CD14-positive monocyte (primary cell): ENCODE measurements at regions of chr6 and their contacts with region 1.

Region 1: DNA sequence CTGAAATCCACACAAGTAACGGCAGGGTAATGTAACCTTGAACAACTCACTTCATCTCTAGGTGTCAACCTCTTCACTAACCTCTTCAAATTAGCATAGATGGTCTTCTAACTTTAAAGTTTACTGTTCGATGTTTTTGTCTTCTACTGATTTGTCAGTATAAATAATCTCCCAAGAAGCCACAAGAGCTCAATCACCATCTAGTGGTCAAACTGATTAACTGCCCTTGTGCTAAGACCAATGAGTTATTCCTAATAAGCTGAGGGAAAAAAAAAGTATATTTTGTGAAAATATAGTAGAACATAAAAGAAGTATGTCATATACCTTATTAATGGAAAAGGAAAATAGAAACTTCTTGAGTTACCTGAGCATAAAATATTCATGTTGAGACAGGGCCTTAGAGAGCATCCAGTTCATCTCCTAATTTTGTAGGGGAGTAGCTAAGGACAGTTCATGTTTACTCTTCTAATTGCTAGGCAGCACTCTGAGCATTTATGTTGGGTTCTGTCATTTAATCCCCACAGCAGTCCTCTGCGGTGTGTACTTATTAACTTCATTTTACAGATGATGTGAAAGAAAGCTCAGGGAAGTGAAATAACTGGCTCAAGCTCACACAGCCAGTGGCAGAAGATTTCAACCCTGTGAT is 317.1 kb downstream of the ESR1 start:
- DNase-seq: peak; percentile 10 to 42 (median 41)
- H3K4me3 ChIP-seq: no peak overlapping the region
- H3K4me3 Mint-ChIP-seq: no peak overlapping the region
- H3K27ac ChIP-seq: peak overlapping the region in 1 of 2 donors; percentile 10
- H3K27ac Mint-ChIP-seq: no peak overlapping the region
- H3K4me1 ChIP-seq: no peaks in the 10 kb centered on the region
- H3K4me1 Mint-ChIP-seq: no peaks in the 10 kb centered on the region
- H3K27me3 ChIP-seq: no peaks in the 10 kb centered on the region
- H3K27me3 Mint-ChIP-seq: peaks cover 0 to 1% (median 0%) of the 10 kb centered on the region in 3 donors
- CTCF ChIP-seq: peak; percentile 73

Region 2: GRCh38 chr6:151675746-151676416 is 448.7 kb before region 1 on chr6:
- intact Hi-C with region 1: loop called in 1 of 2 experiments (anchors 10 kb)
- DNase-seq: peak in 2 of 3 donors; percentile 24 to 30
- H3K4me3 ChIP-seq: no peak overlapping the region
- H3K4me3 Mint-ChIP-seq: no peak overlapping the region
- H3K27ac ChIP-seq: no peak overlapping the region
- H3K27ac Mint-ChIP-seq: no peak overlapping the region
- H3K4me1 ChIP-seq: peaks cover 7 to 10% of the 10 kb centered on the region in 2 donors
- H3K4me1 Mint-ChIP-seq: peaks cover 13% of the 10 kb centered on the region
- H3K27me3 ChIP-seq: no peaks in the 10 kb centered on the region
- H3K27me3 Mint-ChIP-seq: peaks cover 0 to 2% (median 2%) of the 10 kb centered on the region in 3 donors
- CTCF ChIP-seq: peak; percentile 85

Region 3: DNA sequence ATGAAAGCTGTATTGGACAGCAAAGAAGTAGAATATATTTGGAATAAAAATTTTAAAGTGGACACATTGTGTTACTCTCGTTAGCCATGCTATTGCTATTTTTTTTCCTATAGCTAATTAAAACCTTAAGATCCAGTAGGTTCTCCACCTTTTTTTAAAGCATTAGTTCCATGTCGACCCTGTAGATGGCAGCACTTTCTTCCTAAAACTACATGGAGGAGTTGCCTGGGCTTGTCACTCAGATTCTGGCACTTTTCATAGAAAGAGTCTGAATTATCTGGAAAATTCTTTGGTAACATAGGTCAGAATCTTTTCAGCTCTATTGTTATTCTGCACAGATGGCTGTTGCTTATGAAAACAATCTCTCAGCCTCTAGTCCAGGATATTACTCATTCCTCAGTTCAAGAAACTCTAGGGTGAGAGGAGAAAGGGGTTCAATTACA is 359.1 kb before region 1 on chr6:
- intact Hi-C with region 1: loop called in 1 of 2 experiments (anchors 10 kb)
- DNase-seq: peak; percentile 32 to 53 (median 40)
- H3K4me3 ChIP-seq: no peak overlapping the region
- H3K4me3 Mint-ChIP-seq: no peak overlapping the region
- H3K27ac ChIP-seq: no peak overlapping the region
- H3K27ac Mint-ChIP-seq: no peak overlapping the region
- H3K4me1 ChIP-seq: peaks cover 7 to 10% of the 10 kb centered on the region in 2 donors
- H3K4me1 Mint-ChIP-seq: peaks cover 9% of the 10 kb centered on the region
- H3K27me3 ChIP-seq: no peaks in the 10 kb centered on the region
- H3K27me3 Mint-ChIP-seq: peaks cover 0 to 3% (median 3%) of the 10 kb centered on the region in 3 donors
- CTCF ChIP-seq: peak; percentile 83

Region 4: DNA sequence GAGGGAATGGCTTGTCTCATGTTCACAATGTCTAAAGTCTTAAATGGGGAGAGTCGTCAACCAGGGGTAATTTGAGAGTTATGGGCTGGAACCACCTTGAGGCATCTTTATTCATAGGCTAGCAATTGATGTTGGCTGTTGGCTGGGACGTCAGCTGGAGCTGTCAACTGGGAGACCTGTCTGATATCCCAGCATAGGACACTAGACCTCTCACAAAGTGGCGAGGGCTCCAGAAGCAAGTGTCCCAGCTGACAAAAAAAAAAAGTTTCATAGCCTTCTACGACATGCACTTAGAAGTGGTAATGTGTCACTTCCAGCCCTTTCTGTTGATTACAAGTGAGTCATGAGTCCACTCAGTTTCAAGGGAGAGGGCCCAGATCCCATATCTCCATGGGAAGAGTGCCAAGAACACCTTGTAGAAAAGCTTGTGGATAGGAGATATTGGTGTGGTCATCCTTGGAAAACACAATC is 39.1 kb before region 1 on chr6:
- intact Hi-C with region 1: no loop called
- DNase-seq: no peak
- H3K4me3 ChIP-seq: no peak overlapping the region
- H3K4me3 Mint-ChIP-seq: no peak overlapping the region
- H3K27ac ChIP-seq: no peak overlapping the region
- H3K27ac Mint-ChIP-seq: no peak overlapping the region
- H3K4me1 ChIP-seq: no peaks in the 10 kb centered on the region
- H3K4me1 Mint-ChIP-seq: no peaks in the 10 kb centered on the region
- H3K27me3 ChIP-seq: no peaks in the 10 kb centered on the region
- H3K27me3 Mint-ChIP-seq: peaks cover 0 to 2% (median 0%) of the 10 kb centered on the region in 3 donors
- CTCF ChIP-seq: no peak

Region 5: GRCh38 chr6:152948150-152948768 is 823.7 kb after region 1 on chr6:
- intact Hi-C with region 1: no loop called
- DNase-seq: peak; percentile 3 to 34 (median 15)
- H3K4me3 ChIP-seq: no peak overlapping the region
- H3K4me3 Mint-ChIP-seq: peak overlapping the region; percentile 54 to 83
- H3K27ac ChIP-seq: no peak overlapping the region
- H3K27ac Mint-ChIP-seq: no peak overlapping the region
- H3K4me1 ChIP-seq: no peaks in the 10 kb centered on the region
- H3K4me1 Mint-ChIP-seq: peaks cover 6% of the 10 kb centered on the region
- H3K27me3 ChIP-seq: no peaks in the 10 kb centered on the region
- H3K27me3 Mint-ChIP-seq: peaks cover 2 to 3% (median 3%) of the 10 kb centered on the region in 3 donors
- CTCF ChIP-seq: peak; percentile 74